Esophagus squamous epithelium (tissue), 5 donors: ENCODE measurements at regions of chr3 and their contacts with region 1.

Region 1: DNA sequence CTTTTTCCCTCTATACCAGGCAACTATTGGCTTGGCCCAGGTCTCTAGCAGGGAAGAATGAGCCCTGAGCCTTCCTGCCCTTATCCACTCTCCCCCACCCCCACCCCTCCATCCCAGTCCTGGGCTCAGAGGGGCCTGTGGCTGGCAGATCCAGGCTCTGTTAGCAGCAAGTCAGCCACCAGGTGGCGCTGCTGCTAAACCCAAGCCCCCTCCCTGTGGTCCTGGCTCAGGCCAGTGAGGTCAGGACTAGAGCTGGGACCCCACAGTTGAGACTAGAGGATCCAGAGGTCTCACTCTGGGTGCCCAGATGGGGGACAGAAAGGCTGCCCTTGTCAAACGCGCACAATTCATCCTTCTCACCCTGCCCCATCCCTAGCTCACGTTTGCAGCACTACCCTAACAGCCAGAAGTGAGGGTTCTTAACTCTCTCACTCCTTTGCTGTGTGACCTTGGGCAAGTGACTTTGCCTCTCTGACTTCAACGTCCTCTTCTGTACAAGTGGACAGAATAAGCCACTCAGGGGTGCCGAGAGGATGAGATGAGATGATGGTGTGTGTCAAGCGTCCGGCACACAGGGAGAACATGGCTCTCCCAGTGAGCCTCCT is 46.8 kb upstream of the SLC6A1 start:
- DNase-seq: no peak
- H3K4me3 ChIP-seq: no peak overlapping the region
- H3K27ac ChIP-seq: no peak overlapping the region
- H3K4me1 ChIP-seq: peaks cover 0 to 4% (median 0%) of the 10 kb centered on the region in 3 donors
- H3K27me3 ChIP-seq: peaks cover 0 to 27% (median 0%) of the 10 kb centered on the region in 4 donors
- CTCF ChIP-seq: peak; percentile 66 to 87 (median 80)
- POLR2A ChIP-seq: no peak

Region 2: DNA sequence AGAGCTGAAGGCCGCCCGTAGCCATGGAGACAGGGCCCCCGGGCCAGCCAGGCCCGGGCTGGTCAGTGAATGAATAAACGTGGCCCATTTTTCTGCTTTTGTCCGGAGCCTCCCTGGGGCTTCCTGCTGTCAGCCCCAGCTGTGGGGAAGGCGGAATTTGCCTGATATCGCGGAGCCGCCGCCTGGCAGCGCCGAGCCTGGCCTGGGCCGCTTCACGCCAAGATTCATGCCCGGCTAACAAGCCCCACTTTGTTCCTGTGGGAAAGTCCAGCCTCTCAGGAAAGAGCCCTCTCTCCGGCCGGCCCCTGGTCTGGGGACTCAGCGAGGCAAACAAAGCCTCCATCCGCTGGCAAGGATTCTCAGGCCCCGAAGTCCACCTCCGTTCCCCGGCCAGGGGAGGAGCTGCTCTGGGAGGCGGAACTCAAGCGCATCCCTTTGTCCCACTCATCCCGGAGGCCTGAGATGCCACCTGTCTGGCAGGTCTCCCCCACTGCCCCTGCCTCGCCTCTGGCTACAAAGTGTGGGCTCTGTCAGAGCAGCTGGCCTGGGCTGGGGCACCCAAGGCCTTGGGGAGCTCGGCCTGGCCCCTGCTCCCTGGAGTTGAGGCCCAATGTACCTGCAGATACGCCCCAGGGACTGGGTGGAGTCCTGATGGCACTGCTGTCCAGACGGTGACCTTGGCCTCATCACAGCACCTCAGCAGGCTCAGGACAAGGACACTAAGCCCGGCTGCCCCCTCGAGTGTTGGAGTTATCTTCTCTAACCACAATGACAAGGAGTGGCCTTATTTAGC is 181.3 kb before region 1 on chr3:
- intact Hi-C with region 1: loop called (anchors 10 kb)
- DNase-seq: no peak
- H3K4me3 ChIP-seq: no peak overlapping the region
- H3K27ac ChIP-seq: no peak overlapping the region
- H3K4me1 ChIP-seq: no peaks in the 10 kb centered on the region
- H3K27me3 ChIP-seq: peaks cover 0 to 79% (median 0%) of the 10 kb centered on the region in 4 donors
- CTCF ChIP-seq: no peak
- POLR2A ChIP-seq: no peak